Mammary epithelial cell (primary cell): ENCODE measurements at regions of chr2 and their contacts with region 1.

Region 1: DNA sequence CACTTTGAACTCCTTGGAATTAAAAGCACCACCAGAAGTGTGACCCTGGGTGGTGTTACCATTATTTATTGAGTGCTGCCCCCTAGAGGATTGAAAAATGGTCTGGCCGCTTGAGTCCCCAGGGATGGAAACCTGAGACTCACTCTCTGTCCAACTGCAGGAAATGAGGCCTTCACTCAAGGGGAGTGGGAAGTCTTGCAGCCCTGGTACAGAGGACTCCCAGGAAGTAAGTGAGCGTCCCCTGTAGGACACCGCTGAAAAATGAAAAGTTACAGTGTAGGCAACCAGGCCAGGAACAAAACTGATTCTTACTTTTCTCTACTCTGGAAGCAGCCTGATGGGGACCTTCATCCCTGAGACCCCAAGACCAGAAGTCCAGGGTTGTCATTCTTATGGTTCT is 2.2 kb upstream of the NRP2 start:
- DNase-seq: peak; percentile 77
- H3K4me3 ChIP-seq: no peak overlapping the region
- H3K27ac ChIP-seq: peak overlapping the region; percentile 93
- H3K4me1 ChIP-seq: peaks cover 60% of the 10 kb centered on the region
- H3K27me3 ChIP-seq: no peaks in the 10 kb centered on the region
- CTCF ChIP-seq: peak; percentile 69 to 75

Region 2: GRCh38 chr2:204325468-204325867 is 1354.6 kb before region 1 on chr2:
- CTCF ChIA-PET with region 1: no interaction called
- dilution Hi-C with region 1: no loop called
- in situ Hi-C with region 1: no loop called
- intact Hi-C with region 1: loop called (anchors 1 kb)
- DNase-seq: peak; percentile 59
- H3K4me3 ChIP-seq: no peak overlapping the region
- H3K27ac ChIP-seq: no peak overlapping the region
- H3K4me1 ChIP-seq: no peaks in the 10 kb centered on the region
- H3K27me3 ChIP-seq: no peaks in the 10 kb centered on the region
- CTCF ChIP-seq: peak; percentile 78 to 80

Region 3: DNA sequence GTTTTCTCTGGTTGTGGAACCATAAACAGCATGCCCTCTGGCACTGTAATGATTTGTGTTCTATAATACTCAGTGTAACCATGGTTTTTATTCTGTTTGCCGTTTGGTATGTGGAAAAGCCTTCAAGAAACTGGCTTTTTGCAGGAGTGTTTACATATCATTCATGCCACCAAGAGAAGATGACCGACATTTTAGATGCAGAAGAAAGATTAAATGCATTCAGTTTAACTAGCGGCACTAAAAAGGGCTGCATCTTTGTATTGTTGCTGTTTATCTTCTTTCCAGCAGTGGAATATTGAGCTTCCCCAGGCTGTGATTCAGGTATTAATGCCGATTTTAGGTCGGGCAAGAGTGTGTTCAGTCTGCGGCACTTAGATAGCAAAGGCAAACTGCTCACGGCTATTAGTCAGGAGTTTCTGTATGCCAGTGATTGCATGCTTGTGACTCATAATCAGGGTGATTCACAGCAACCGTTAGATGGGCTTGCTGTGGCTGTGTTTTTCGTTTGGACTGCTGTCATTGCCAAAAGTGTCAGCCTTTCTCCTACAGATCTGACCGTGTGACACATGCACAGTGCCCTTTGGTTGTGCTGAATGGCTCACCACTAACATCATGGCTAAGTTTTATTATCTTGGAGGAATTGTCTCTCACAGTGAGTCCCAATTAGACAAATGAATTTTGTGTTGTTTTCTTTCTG is 655.1 kb before region 1 on chr2:
- CTCF ChIA-PET with region 1: no interaction called
- dilution Hi-C with region 1: no loop called
- in situ Hi-C with region 1: no loop called
- intact Hi-C with region 1: loop called (anchors 10 kb)
- DNase-seq: peak; percentile 96
- H3K4me3 ChIP-seq: no peak overlapping the region
- H3K27ac ChIP-seq: no peak overlapping the region
- H3K4me1 ChIP-seq: peaks cover 11% of the 10 kb centered on the region
- H3K27me3 ChIP-seq: no peaks in the 10 kb centered on the region
- CTCF ChIP-seq: no peak

Region 4: DNA sequence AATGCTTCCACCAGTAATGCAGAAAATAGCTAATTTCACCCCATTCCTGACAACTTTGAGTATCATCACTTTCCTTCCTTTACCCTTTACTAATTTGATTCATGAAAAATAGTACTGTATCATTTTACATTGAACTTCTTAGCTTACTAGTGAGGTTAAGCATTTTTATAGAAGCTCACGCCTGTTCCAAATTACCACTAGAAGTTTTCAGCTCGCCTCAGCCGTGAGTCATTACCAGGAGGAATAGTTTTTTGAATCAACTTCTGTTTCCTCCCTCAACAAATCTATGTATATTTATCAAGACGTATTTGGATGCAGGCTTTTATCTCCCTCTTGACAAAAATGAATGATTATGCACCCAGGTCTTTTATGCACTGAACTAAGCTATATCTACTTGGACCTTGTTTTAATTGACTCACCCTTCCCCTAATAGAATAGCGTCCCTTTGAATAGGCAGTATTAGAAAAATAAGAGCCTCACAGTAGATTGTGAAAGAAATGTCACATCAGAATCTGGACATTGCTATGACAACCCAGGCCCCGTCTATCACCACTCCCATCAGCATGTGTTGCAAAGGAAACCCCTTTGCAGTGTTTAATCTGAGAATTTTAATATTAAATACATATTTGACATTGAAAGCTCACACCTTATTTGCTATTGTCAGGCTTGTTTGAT is 205.2 kb before region 1 on chr2:
- CTCF ChIA-PET with region 1: no interaction called
- dilution Hi-C with region 1: no loop called
- in situ Hi-C with region 1: loop called in 1 of 2 experiments (anchors 10 kb)
- intact Hi-C with region 1: no loop called
- DNase-seq: no peak
- H3K4me3 ChIP-seq: no peak overlapping the region
- H3K27ac ChIP-seq: no peak overlapping the region
- H3K4me1 ChIP-seq: no peaks in the 10 kb centered on the region
- H3K27me3 ChIP-seq: no peaks in the 10 kb centered on the region
- CTCF ChIP-seq: no peak

Region 5: GRCh38 chr2:205593891-205594290 is 86.2 kb before region 1 on chr2:
- CTCF ChIA-PET with region 1: interaction called, 44 read pairs
- dilution Hi-C with region 1: no loop called
- in situ Hi-C with region 1: no loop called
- intact Hi-C with region 1: loop called (anchors 1 kb)
- DNase-seq: no peak
- H3K4me3 ChIP-seq: no peak overlapping the region
- H3K27ac ChIP-seq: no peak overlapping the region
- H3K4me1 ChIP-seq: peaks cover 7% of the 10 kb centered on the region
- H3K27me3 ChIP-seq: no peaks in the 10 kb centered on the region
- CTCF ChIP-seq: no peak

Region 6: GRCh38 chr2:205605628-205606304 is 74.3 kb before region 1 on chr2:
- CTCF ChIA-PET with region 1: no interaction called
- dilution Hi-C with region 1: no loop called
- in situ Hi-C with region 1: no loop called
- intact Hi-C with region 1: no loop called
- DNase-seq: no peak
- H3K4me3 ChIP-seq: no peak overlapping the region
- H3K27ac ChIP-seq: no peak overlapping the region
- H3K4me1 ChIP-seq: no peaks in the 10 kb centered on the region
- H3K27me3 ChIP-seq: peaks cover 2% of the 10 kb centered on the region
- CTCF ChIP-seq: no peak

Region 7: DNA sequence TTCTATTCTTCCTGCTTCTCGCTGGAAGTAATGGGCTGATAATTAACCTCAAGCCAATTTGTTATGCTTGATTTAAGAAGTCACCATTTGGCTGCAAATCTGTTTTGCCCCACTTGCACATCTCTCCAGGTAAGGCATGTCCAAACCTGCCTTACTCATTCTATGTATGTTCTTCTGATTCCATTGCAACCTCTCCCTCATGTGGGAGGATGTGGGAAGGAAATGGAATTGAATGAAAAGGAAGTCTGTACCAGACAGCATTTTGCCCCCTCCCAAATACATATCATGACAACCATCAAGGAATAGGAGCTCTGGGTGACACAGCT is 133.9 kb after region 1 on chr2:
- CTCF ChIA-PET with region 1: no interaction called
- dilution Hi-C with region 1: no loop called
- in situ Hi-C with region 1: no loop called
- intact Hi-C with region 1: loop called (anchors 1 kb)
- DNase-seq: peak; percentile 68
- H3K4me3 ChIP-seq: no peak overlapping the region
- H3K27ac ChIP-seq: peak overlapping the region; percentile 44
- H3K4me1 ChIP-seq: peaks cover 12% of the 10 kb centered on the region
- H3K27me3 ChIP-seq: no peaks in the 10 kb centered on the region
- CTCF ChIP-seq: peak in 1 of 2 donors; percentile 24

Region 8: GRCh38 chr2:205834796-205835195 is 154.7 kb after region 1 on chr2:
- CTCF ChIA-PET with region 1: no interaction called
- dilution Hi-C with region 1: no loop called
- in situ Hi-C with region 1: no loop called
- intact Hi-C with region 1: no loop called
- DNase-seq: no peak
- H3K4me3 ChIP-seq: no peak overlapping the region
- H3K27ac ChIP-seq: no peak overlapping the region
- H3K4me1 ChIP-seq: peaks cover 3% of the 10 kb centered on the region
- H3K27me3 ChIP-seq: no peaks in the 10 kb centered on the region
- CTCF ChIP-seq: no peak

Region 9: GRCh38 chr2:205878999-205879761 is 199.1 kb after region 1 on chr2:
- CTCF ChIA-PET with region 1: no interaction called
- dilution Hi-C with region 1: no loop called
- in situ Hi-C with region 1: no loop called
- intact Hi-C with region 1: no loop called
- DNase-seq: no peak
- H3K4me3 ChIP-seq: no peak overlapping the region
- H3K27ac ChIP-seq: no peak overlapping the region
- H3K4me1 ChIP-seq: no peaks in the 10 kb centered on the region
- H3K27me3 ChIP-seq: no peaks in the 10 kb centered on the region
- CTCF ChIP-seq: no peak

Region 10: GRCh38 chr2:205947621-205948495 is 267.8 kb after region 1 on chr2:
- CTCF ChIA-PET with region 1: no interaction called
- dilution Hi-C with region 1: no loop called
- in situ Hi-C with region 1: no loop called
- intact Hi-C with region 1: loop called (anchors 2 kb)
- DNase-seq: peak; percentile 35
- H3K4me3 ChIP-seq: no peak overlapping the region
- H3K27ac ChIP-seq: no peak overlapping the region
- H3K4me1 ChIP-seq: no peaks in the 10 kb centered on the region
- H3K27me3 ChIP-seq: no peaks in the 10 kb centered on the region
- CTCF ChIP-seq: peak; percentile 92